ENCODE measurements at regions of chr3 and their contacts with region 1.

Region 1: DNA sequence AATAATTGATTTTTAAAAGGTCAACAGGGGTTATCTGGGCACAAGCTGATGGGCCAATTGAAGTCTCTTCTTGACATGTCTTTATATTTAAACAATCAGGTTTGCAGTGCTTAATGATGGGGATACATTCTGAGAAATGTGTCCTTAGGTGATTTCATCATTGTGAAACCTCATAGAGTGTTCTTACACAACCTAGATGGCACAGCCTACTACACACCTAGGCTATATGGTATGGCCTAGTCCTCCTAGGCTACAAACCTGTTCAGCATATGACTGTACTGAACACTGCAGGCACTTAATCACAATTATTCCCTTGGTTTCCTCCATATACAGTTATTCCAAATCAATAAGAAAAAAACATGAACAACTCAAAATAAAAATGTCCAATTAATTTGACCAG is 75.8 kb downstream of the IQSEC1 start:
- DNase-seq: no peak
- ATAC-seq: no peak

Region 2: GRCh38 chr3:12638105-12638504 is 359.3 kb before region 1 on chr3:
- intact Hi-C with region 1: no loop called
- DNase-seq: no peak
- ATAC-seq: no peak

Region 3: GRCh38 chr3:13028010-13028821 is 30.8 kb after region 1 on chr3:
- intact Hi-C with region 1: loop called (anchors 1 kb)
- DNase-seq: no peak
- ATAC-seq: no peak

Measured in sciatic nerve (tissue), 2 donors.